Posterior vena cava (tissue), 2 donors: ENCODE measurements at regions of chr12 and their contacts with region 1.

Region 1: DNA sequence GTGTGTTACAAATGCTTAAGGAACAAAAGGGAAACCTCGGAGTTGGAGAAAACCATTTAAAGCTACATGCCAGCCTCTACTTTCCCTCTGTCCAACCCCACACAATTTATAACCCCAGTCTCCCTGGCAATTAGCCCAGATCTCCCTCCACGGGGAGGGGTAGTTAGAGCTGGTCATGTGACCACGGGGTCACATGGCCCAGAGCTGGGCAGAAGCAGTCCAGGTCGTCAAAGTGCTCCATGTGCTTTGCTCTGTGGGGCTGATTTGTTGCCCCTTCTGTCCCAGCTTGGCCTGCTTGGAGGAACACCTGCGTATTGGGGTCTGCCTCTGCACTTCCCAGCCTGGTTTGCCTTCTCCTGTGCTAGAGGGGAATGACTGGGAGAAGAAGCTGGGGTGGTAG is 219.1 kb downstream of the RBM19 start:
- DNase-seq: peak; percentile 10

Region 2: DNA sequence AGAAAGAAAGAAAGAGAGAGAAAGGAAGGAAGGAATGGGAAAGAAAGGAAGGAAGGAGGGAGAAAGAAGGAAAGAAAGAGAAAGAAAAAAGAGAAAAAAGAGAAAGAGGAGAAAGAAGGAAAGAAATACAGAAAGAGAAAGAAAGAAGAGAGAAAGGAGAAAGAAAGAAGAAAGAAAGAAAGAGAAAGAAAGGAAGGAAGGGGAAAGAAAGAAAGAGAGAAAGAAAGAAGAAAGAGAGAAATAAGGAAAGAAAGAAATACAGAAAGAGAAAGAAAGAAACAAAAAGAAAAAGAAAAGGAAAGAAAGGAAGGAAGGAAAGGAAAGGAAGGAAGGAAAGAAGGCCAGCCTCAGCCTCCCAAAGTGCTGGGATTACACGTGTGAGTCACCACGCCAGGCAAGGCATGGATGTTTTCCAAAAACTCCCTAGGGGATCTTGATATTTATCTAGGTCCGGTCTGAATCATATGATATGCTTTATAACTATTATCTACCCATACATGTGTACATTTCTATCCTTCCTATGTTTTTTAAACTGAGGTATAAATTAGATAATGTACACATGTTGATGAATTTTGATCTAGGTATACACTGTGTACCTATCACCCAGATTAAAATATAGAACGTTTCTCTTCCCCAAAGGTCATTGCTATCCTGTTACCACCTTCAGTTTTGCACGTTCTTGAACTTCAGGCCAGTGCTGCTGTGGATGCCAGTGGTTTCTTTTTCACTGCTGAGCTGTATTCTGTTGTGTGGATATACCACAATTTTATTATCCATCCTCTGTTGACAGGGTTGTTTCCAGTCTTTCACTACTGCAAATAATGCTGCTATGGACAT is 41.2 kb after region 1 on chr12:
- intact Hi-C with region 1: loop called in 1 of 2 experiments (anchors 1 kb)
- DNase-seq: no peak